Activated T-helper 1 cell treated with anti-CD3 and anti-CD28 coated beads, Interleukin-12 subunit alpha, Interleukin-12 subunit beta, Interleukin-2, Interleukin-4 antibody, amounts not matched to agents 30 ng/mL and 10 ng/mL and 1 ng/mL, durations not matched to agents 14 hours and 24 hours and 36 hours (primary cell): ENCODE measurements at regions of chr12 and their contacts with region 1.

Region 1: GRCh38 chr12:89225808-89226411 is 126.4 kb downstream of the DUSP6 start:
- DNase-seq: no peak
- H3K4me3 Mint-ChIP-seq: peak overlapping the region; percentile 73
- H3K27ac Mint-ChIP-seq: peak overlapping the region; percentile 99
- H3K4me1 Mint-ChIP-seq: peaks cover 82% of the 10 kb centered on the region
- H3K27me3 Mint-ChIP-seq: no peaks in the 10 kb centered on the region

Region 2: GRCh38 chr12:88141770-88142609 is 1083.9 kb before region 1 on chr12 and contains the starts of genes CEP290 and TMTC3:
- intact Hi-C with region 1: loop called (anchors 5 kb)
- DNase-seq: peak; percentile 92
- H3K4me3 Mint-ChIP-seq: peak within 1 kb of the TSS; percentile 91
- H3K27ac Mint-ChIP-seq: peak within 1 kb of the TSS; percentile 95
- H3K4me1 Mint-ChIP-seq: peaks cover 34% of the 10 kb centered on the region
- H3K27me3 Mint-ChIP-seq: no peaks in the 10 kb centered on the region
- total RNA-seq, gene CEP290: 15.5 and 17.0 TPM in 2 replicates
- total RNA-seq, gene TMTC3: 6.9 and 7.1 TPM in 2 replicates

Region 3: DNA sequence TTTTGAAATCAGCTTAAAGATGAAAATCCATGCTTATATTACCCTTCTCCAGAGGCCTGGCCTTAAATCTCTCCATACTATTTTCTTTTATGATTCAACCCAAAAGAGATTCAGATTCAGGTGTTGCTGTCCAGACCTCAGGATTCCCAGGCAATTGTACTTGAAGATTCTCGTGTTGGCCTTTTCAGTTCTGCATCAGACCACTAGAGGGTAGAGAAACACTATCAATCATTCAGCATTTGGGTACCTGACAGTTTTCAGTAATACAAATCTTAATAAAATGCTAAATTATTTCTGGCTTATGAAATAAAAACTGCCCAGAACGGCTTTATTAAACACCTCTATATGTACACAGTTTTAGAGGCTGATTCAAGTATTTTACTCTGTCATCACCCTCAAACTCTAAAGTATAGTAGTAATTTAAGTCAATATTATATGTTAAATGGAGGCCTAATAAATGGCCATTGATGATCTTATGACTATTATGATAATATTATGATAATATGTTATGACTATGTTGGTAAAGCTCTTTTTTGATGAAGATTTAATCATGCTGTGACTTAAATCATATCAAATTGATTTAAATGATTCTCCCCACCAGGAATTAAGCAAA is 174.7 kb before region 1 on chr12:
- intact Hi-C with region 1: loop called (anchors 1 kb)
- DNase-seq: no peak
- H3K4me3 Mint-ChIP-seq: no peak overlapping the region
- H3K27ac Mint-ChIP-seq: no peak overlapping the region
- H3K4me1 Mint-ChIP-seq: peaks cover 31% of the 10 kb centered on the region
- H3K27me3 Mint-ChIP-seq: no peaks in the 10 kb centered on the region

Region 4: DNA sequence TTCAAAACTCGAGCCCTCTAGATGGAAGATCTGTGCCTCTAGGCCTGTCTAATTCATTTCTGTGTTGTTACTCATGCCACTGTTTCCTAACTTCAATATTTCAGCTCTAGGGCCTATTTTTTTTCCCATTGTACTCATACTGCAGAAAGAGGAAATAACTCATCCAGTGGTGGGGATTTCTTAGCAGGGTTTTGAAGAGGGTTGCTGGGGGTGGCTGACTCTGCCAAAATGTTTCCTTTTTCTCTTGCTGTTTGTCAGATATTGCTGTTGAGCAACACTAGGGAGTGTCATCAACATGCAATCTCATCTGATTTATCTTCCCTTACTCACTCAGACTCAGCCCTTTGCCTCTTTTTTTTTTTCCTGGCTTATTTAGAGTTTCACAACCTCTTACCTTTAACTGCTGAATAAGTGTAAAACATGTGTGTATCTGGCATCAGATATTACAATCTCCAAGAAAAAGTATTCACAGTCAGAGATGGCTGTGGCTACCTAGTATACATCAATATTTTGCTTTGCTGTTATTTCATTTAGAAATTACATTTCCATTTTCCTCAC is 63.1 kb before region 1 on chr12:
- intact Hi-C with region 1: loop called (anchors 1 kb)
- DNase-seq: peak; percentile 59
- H3K4me3 Mint-ChIP-seq: no peak overlapping the region
- H3K27ac Mint-ChIP-seq: no peak overlapping the region
- H3K4me1 Mint-ChIP-seq: peaks cover 23% of the 10 kb centered on the region
- H3K27me3 Mint-ChIP-seq: no peaks in the 10 kb centered on the region

Region 5: GRCh38 chr12:89261982-89262381 is 36.1 kb after region 1 on chr12:
- intact Hi-C with region 1: loop called (anchors 1 kb)
- DNase-seq: no peak
- H3K4me3 Mint-ChIP-seq: no peak overlapping the region
- H3K27ac Mint-ChIP-seq: no peak overlapping the region
- H3K4me1 Mint-ChIP-seq: peaks cover 34% of the 10 kb centered on the region
- H3K27me3 Mint-ChIP-seq: no peaks in the 10 kb centered on the region

Region 6: DNA sequence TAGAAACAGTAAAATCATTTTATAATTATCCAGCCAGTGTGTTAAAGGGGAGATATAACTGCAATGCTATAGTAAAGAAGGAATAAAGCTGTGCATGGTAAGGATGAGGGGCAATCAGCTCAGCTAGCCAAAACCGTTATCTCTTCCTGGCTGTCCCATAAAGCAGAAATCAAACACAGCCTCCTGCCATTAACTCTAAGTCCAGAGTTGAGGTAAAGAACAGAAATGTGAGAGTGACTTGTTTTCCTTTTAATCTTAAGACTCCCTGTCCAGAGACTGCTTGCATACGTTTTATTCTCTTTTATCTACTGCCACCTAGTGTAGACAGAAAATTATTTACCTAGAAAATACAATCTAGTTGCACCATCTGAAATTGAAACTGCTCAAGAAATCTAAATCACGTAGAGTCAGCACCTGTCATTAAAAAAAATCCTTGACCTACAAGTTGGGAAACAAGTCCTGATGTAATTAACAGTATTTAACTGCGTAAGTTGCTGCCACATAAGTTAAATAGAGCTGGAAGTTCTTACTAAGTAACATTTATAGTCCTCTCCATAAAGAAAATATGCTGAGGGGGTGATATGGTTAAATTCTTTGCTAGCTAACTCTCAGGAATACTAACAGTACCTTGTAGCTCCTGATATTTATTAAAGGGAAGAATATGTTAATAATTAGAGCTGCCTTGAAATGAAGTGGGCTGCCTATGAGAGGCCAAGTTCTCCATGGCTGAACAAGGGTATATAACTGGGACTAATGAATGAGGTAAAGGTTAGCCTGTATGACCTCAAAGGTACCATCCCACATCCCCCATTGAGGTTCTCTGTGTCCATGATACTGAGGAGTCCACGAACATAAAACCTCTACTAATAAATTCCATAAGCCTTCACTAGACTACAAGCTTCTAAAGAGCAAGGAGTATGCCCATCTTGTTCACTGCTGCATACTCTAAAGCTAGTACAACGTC is 236.0 kb after region 1 on chr12:
- intact Hi-C with region 1: loop called (anchors 1 kb)
- DNase-seq: no peak
- H3K4me3 Mint-ChIP-seq: peak overlapping the region; percentile 60
- H3K27ac Mint-ChIP-seq: peak overlapping the region; percentile 36
- H3K4me1 Mint-ChIP-seq: peaks cover 43% of the 10 kb centered on the region
- H3K27me3 Mint-ChIP-seq: no peaks in the 10 kb centered on the region

Region 7: DNA sequence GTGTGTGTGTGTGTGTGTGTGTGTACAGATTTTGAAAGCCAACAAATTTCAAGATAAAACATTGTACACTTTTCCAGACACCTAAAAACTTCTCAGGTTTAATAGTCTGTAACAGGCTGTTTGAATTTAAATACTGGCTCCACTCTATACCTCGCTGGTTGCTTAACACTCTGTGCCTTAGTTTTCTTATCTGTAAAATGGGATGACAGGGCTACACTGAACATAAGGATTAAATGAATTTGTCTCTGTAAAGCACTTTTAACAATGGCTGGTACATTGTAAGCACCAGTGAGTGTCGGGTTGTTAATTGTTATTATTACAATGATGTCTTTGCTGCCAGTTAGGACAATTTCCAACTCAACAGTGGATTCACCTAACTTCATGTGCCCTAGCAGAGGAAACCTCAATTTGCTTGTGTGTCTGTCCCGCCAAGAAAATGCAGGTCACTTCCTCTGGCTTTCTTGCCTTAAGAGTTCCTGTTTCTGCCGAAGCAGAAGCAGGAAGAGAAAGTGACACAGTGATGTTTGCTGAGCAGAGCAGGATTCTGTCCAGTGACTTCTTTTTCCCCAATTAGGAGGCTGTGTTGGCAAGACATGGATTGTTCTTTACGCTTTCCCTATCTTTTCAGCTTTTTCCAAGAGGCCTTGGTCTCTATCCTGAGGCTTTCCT is 636.7 kb after region 1 on chr12:
- intact Hi-C with region 1: loop called (anchors 2 kb)
- DNase-seq: peak; percentile 44
- H3K4me3 Mint-ChIP-seq: peak overlapping the region; percentile 76
- H3K27ac Mint-ChIP-seq: peak overlapping the region; percentile 95
- H3K4me1 Mint-ChIP-seq: peaks cover 60% of the 10 kb centered on the region
- H3K27me3 Mint-ChIP-seq: no peaks in the 10 kb centered on the region